ENCODE measurements at regions of chr22 and their contacts with region 1.

Region 1: DNA sequence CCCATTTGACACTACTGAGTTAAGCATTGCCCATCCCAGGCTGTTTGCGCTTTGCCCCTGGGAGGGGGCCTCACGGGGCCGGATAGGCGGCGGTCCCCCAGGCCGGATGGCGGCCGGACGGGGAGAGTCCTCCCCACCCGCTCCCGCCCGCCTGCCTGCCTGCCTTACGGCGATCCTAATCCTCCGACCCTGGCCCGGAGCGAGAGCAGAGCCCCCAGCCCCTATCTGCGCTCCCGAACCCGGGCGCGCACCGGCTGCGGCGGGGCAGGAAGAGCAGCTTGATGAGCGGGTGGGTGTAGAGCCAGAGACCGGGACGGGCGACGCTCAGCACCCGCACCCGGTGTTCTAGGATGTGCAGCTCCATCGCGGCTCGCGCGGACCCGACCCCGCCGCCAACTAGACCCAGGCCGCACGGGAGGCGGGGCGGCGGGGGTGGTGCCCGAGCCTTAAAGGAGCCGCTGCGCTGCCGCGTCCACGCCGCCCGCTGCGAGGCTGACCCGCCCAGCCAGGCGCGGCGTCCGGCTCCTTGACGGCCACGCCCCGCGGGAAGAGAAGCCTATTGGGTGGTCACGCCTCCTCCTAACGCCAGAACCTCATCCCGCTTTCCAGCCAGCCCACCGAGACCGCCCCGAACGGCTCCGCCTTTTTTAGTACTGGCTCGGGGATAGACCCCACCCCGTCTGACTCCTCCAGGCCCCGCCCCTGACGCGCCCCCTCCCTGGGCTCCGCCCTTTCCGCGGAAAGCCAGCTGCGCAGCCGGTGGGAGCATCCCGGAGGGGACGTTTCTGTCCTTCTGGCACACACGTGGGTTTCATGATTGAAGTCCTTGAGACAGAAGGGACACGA is at the start of gene CASTOR1:
- DNase-seq: peak; percentile 93
- H3K4me3 Mint-ChIP-seq: peak within 1 kb of the TSS; percentile 77
- H3K27ac Mint-ChIP-seq: peak within 1 kb of the TSS; percentile 8
- H3K4me1 Mint-ChIP-seq: peaks cover 31% of the 10 kb centered on the region
- H3K27me3 Mint-ChIP-seq: no peaks in the 10 kb centered on the region
- total RNA-seq, gene CASTOR1: 2.1 to 3.8 TPM

Region 2: GRCh38 chr22:29797351-29797750 is 492.0 kb before region 1 on chr22:
- CTCF ChIA-PET with region 1: no interaction called
- intact Hi-C with region 1: no loop called
- DNase-seq: no peak
- H3K4me3 Mint-ChIP-seq: no peak overlapping the region
- H3K27ac Mint-ChIP-seq: no peak overlapping the region
- H3K4me1 Mint-ChIP-seq: no peaks in the 10 kb centered on the region
- H3K27me3 Mint-ChIP-seq: no peaks in the 10 kb centered on the region

Region 3: DNA sequence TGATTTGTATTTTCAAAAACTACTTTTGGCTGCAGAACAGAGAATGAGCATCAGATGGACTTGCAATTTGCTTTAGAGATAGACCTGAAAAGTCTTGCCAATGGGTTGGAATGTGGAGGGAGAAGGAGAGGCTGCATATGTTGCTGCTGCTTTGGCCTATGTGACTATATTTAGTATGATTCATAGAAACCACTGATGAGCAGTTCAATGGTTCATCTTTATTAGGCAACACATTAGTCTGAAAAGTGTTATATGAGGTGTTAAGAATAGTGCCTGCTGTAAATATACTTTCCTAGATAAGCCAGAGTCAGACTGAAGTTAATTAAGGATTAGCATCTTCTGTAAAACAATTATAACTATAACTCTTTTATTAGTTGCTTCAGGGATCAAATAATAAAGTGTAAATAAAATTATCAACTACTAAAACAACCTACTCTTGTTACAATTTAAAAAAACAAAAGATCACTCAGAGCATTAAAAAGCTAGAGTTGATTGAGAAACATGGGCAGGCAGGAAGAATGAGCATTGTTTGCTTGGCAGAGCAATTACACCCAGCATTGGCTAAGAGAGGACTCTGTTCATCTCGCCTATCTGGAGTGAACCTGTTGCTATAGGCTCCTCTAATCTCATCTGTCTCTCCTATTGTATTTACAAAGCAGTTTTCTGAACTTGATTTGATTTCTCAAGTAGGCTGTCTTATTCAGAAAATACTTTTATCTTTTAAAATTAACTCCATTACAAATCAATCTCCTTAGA is 172.8 kb before region 1 on chr22:
- CTCF ChIA-PET with region 1: interaction called, 11 read pairs
- intact Hi-C with region 1: no loop called
- DNase-seq: no peak
- H3K4me3 Mint-ChIP-seq: no peak overlapping the region
- H3K27ac Mint-ChIP-seq: no peak overlapping the region
- H3K4me1 Mint-ChIP-seq: peaks cover 35% of the 10 kb centered on the region
- H3K27me3 Mint-ChIP-seq: no peaks in the 10 kb centered on the region

Region 4: DNA sequence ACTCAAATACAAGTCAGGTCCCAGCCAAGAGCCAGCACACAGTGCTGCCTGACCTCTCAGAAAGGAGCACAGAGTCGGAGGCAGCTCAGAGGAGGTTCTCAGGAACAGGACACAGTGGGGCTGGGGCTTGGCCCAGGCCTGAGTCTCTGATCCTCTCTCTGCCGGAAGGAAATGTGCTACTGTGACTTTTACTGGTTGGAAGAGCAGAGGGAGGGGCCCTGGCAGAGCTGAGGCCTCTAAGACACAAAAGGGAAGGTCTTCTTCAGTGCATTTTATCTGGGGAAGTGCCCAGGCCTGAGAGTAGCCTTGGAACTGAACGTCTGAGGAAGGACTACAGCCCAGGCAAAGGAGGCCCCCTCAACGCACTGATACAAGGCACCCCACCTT is 16.2 kb after region 1 on chr22:
- CTCF ChIA-PET with region 1: interaction called, 10 read pairs
- intact Hi-C with region 1: loop called (anchors 2 kb)
- DNase-seq: peak; percentile 78
- H3K4me3 Mint-ChIP-seq: peak overlapping the region; percentile 70
- H3K27ac Mint-ChIP-seq: peak overlapping the region; percentile 97
- H3K4me1 Mint-ChIP-seq: peaks cover 98% of the 10 kb centered on the region
- H3K27me3 Mint-ChIP-seq: no peaks in the 10 kb centered on the region

Region 5: DNA sequence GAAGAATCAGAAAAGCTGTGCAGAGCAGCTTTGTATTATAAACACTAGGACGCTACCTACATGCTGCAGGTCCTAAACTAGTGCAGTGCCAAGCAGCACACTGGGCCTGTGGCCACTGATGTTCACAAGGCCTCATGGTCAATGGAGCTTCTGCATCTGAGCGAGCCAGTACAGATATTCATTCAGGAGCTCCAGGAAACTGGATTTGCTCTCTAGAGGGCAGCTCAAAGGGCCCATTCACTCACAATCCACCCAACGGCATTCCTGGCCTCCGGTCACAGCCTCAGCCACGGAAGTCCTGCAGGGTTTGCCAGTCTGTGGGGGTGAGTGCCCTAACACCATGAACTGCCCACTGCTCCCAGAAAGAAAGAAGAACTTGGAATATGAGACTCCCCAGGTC is 43.2 kb after region 1 on chr22:
- CTCF ChIA-PET with region 1: interaction called, 19 read pairs
- intact Hi-C with region 1: no loop called
- DNase-seq: no peak
- H3K4me3 Mint-ChIP-seq: no peak overlapping the region
- H3K27ac Mint-ChIP-seq: peak overlapping the region; percentile 78
- H3K4me1 Mint-ChIP-seq: peaks cover 37% of the 10 kb centered on the region
- H3K27me3 Mint-ChIP-seq: no peaks in the 10 kb centered on the region

Region 6: DNA sequence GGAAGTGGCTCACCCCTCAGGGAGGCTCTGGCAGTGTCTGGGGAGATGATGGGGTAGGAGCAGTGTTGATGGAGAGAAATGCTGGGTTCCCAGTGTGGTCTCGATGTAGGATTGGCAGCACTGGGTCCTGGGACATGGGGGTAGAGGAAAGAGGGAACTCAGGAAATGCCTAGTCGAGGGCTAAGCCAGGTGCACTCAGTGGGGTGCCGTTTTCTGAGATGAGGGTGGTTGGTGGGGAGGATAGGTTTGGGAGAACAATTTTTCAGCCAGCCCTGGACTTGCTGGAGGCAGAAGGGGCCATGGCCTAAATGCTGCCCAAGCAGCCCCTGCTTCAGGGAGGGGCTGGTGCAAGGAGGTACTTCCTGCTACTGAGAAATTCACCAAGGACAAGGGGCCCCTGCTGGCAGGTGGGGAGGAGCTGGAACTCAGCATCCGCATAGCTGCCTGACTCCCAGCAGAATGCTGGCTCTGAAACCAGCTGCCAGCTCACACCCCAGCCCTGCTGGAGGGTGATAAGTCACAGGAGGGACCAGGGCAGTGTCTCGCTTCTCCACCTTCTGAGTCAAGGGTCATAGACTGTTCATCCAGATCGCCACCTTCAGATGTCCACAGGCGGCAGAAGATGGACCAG is 73.4 kb after region 1 on chr22:
- CTCF ChIA-PET with region 1: interaction called, 22 read pairs
- intact Hi-C with region 1: no loop called
- DNase-seq: no peak
- H3K4me3 Mint-ChIP-seq: no peak overlapping the region
- H3K27ac Mint-ChIP-seq: no peak overlapping the region
- H3K4me1 Mint-ChIP-seq: peaks cover 4% of the 10 kb centered on the region
- H3K27me3 Mint-ChIP-seq: no peaks in the 10 kb centered on the region

Region 7: GRCh38 chr22:30396871-30397655 is 107.7 kb after region 1 on chr22 and contains the start of gene SEC14L2:
- CTCF ChIA-PET with region 1: interaction called, 287 read pairs
- intact Hi-C with region 1: no loop called
- DNase-seq: peak; percentile 73
- H3K4me3 Mint-ChIP-seq: peak within 1 kb of the TSS; percentile 87
- H3K27ac Mint-ChIP-seq: no peak within 1 kb of the TSS
- H3K4me1 Mint-ChIP-seq: peaks cover 43% of the 10 kb centered on the region
- H3K27me3 Mint-ChIP-seq: no peaks in the 10 kb centered on the region
- total RNA-seq, gene SEC14L2: 8.2 to 8.8 TPM

Region 8: GRCh38 chr22:30485362-30485988 is 196.1 kb after region 1 on chr22:
- CTCF ChIA-PET with region 1: interaction called, 5 read pairs
- intact Hi-C with region 1: loop called (anchors 1 kb)
- DNase-seq: peak; percentile 81
- H3K4me3 Mint-ChIP-seq: no peak overlapping the region
- H3K27ac Mint-ChIP-seq: no peak overlapping the region
- H3K4me1 Mint-ChIP-seq: no peaks in the 10 kb centered on the region
- H3K27me3 Mint-ChIP-seq: no peaks in the 10 kb centered on the region

Measured in activated naive CD4-positive, alpha-beta T cell treated with anti-CD3 and anti-CD28 coated beads for 36 hours (primary cell).